ENCODE measurements at regions of chr19 and their contacts with region 1.

Region 1: DNA sequence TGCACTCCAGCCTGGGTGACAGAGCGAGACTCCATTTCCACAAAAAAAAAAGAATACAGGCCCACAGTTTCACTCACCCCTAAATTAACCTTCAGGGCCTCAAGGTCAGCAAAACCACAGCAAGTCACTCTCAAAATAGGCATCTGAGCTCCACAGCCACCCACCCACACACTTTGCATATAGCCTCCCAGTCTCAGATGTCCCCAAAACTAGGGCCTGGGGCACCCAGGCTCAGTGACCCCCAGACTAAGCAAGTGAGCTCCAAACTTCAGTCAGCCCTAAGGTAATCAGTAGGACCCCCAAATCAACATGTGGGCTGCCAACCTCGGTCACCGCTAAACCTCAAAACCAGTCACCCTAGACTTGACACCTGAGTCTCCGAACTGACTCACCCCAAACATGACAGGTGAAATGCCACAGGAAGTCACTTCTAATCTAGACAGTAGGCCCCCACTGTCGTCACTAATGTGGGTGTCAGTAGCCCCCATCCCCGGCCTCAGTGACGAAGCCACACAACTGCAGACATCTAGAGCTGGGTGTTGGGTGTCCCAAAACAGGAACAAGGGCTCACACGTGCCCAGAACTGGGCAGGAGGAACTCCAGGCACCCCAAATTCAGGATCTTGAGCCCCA is 13.9 kb downstream of the RABAC1 start:
- DNase-seq: peak; percentile 84 to 97 (median 95)
- H3K4me3 ChIP-seq: no peak overlapping the region
- H3K4me3 Mint-ChIP-seq: peak overlapping the region; percentile 53 to 91 (median 74)
- H3K27ac ChIP-seq: peak overlapping the region; percentile 28
- H3K27ac Mint-ChIP-seq: peak overlapping the region; percentile 95 to 100 (median 99)
- H3K4me1 ChIP-seq: peaks cover 39% of the 10 kb centered on the region
- H3K4me1 Mint-ChIP-seq: peaks cover 45 to 77% (median 55%) of the 10 kb centered on the region in 3 donors
- H3K27me3 ChIP-seq: no peaks in the 10 kb centered on the region
- H3K27me3 Mint-ChIP-seq: peaks cover 7 to 9% of the 10 kb centered on the region in 2 donors

Region 2: GRCh38 chr19:41847351-41848105 is 97.7 kb before region 1 on chr19:
- CTCF ChIA-PET with region 1: no interaction called
- POLR2A ChIA-PET with region 1: no interaction called
- DNase-seq: no peak
- H3K4me3 ChIP-seq: no peak overlapping the region
- H3K4me3 Mint-ChIP-seq: no peak overlapping the region
- H3K27ac ChIP-seq: no peak overlapping the region
- H3K27ac Mint-ChIP-seq: peak overlapping the region in 1 of 8 donors; percentile 78
- H3K4me1 ChIP-seq: no peaks in the 10 kb centered on the region
- H3K4me1 Mint-ChIP-seq: no peaks in the 10 kb centered on the region
- H3K27me3 ChIP-seq: no peaks in the 10 kb centered on the region
- H3K27me3 Mint-ChIP-seq: peaks cover 0 to 4% of the 10 kb centered on the region in 2 donors

Region 3: DNA sequence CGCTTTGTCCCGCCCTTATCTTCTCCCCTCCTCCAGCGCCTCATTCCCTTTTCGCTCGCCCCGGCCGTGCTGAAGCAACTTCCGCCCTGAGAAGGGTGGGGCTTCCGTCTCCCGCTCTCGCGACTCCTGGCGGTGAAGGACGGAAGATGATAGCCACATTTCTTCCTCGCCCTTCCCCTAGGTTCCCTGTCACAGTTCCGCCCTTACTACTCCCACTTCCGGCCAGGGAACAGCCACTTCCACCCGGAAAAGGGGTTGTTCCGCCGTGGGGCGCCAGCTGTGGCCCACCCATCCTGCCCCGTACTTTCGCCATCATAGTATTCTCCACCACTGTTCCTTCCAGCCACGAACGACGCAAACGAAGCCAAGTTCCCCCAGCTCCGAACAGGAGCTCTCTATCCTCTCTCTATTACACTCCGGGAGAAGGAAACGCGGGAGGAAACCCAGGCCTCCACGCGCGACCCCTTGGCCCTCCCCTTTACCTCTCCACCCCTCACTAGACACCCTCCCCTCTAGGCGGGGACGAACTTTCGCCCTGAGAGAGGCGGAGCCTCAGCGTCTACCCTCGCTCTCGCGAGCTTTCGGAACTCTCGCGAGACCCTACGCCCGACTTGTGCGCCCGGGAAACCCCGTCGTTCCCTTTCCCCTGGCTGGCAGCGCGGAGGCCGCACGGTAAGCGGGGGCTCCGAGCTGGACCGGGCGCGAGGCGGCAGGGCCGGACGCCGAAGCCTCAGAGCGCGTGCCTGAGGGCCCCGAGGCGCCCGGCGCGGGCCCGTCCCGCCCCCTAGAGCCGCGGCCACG is 85.4 kb before region 1 on chr19 and contains the start of gene RPS19:
- CTCF ChIA-PET with region 1: interaction called, 48 read pairs
- POLR2A ChIA-PET with region 1: interaction called, 24 read pairs
- DNase-seq: peak; percentile 96 to 99 (median 98)
- H3K4me3 ChIP-seq: peak within 1 kb of the TSS; percentile 79
- H3K4me3 Mint-ChIP-seq: peak within 1 kb of the TSS; percentile 88 to 99 (median 92)
- H3K27ac ChIP-seq: peak within 1 kb of the TSS; percentile 93
- H3K27ac Mint-ChIP-seq: peak within 1 kb of the TSS; percentile 86 to 100 (median 96)
- H3K4me1 ChIP-seq: peaks cover 48% of the 10 kb centered on the region
- H3K4me1 Mint-ChIP-seq: peaks cover 43 to 50% (median 46%) of the 10 kb centered on the region in 3 donors
- H3K27me3 ChIP-seq: no peaks in the 10 kb centered on the region
- H3K27me3 Mint-ChIP-seq: peaks cover 0 to 4% of the 10 kb centered on the region in 2 donors
- total RNA-seq, gene RPS19: 3,036 to 3,142 TPM

Region 4: DNA sequence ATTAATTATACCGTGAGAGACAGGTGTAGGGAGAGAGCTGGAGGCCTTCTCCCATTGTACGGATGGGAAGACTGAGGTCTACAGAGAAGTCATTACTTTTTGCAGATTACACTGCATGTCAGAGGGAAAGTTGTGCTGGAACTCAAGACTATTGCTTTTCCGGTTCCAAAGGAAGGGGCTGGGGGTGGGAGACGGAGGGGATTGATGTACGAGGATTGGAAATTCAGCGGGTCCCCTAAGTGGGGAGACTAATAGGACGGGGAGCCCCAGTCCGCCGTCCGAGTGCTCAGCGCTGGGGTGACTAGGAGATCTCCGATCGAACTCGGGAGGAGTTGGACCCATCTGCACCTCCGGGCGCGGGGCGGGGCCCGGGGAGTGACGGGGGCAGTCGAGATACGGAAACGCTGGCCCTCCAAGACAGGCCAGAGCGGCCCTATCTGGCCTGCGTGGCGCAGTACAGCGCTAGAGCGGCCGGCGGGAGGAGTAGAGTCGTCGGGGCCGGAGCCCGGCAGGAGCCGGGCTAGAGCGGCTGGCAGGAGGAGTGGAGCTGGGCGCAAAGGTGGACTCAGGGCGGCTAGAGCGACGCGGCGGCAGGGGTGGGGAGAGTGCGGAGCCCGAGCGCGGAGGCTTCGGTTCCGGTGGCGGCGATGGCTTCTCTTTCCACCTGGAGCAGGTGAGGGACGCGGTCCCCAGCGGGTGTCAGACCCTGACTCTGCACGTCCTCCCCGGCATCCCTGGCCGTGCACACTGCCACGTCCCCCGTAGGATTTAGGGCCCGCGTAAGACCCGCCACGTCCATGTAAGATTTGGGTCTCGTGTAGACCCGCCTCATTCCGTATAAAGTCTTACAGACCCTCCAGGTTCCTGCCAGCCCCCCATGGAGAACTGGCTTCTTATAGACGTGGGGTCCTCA is 61.2 kb before region 1 on chr19:
- CTCF ChIA-PET with region 1: interaction called, 12 read pairs
- POLR2A ChIA-PET with region 1: interaction called, 17 read pairs
- DNase-seq: peak; percentile 72 to 91 (median 83)
- H3K4me3 ChIP-seq: peak overlapping the region; percentile 100
- H3K4me3 Mint-ChIP-seq: peak overlapping the region; percentile 85 to 99 (median 94)
- H3K27ac ChIP-seq: peak overlapping the region; percentile 90
- H3K27ac Mint-ChIP-seq: peak overlapping the region; percentile 91 to 98 (median 97)
- H3K4me1 ChIP-seq: peaks cover 62% of the 10 kb centered on the region
- H3K4me1 Mint-ChIP-seq: peaks cover 54 to 65% (median 57%) of the 10 kb centered on the region in 3 donors
- H3K27me3 ChIP-seq: no peaks in the 10 kb centered on the region
- H3K27me3 Mint-ChIP-seq: peaks cover 0 to 2% of the 10 kb centered on the region in 2 donors

Region 5: DNA sequence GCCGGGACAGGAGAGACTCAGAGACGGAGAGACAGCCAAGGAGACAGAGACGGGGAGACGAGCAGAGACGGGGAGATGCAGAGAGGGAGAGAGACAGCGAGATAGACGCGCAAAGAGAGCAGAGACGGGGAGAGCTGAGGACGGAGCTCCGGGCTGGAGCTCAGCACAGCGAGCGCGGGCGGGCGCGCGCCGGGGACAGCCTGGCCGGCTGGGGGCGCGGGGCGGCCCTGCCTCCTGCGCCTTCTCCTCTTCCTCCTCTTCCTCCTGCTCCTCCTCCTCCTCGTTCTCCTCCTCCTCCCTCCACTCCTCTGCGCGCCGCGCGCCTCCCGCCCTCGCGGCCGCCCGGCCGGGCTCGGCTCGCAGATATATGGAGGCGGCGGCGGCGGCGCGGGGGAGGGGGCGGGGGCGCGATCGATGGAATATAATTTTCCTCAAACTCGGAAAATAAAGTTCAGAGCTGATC is 17.0 kb before region 1 on chr19 and contains the start of gene ERFL:
- CTCF ChIA-PET with region 1: interaction called, 10 read pairs
- POLR2A ChIA-PET with region 1: interaction called, 8 read pairs
- DNase-seq: peak in 1 of 5 donors; percentile 50
- H3K4me3 ChIP-seq: peak within 1 kb of the TSS; percentile 75
- H3K4me3 Mint-ChIP-seq: peak within 1 kb of the TSS; percentile 86 to 94 (median 88)
- H3K27ac ChIP-seq: peak within 1 kb of the TSS; percentile 53
- H3K27ac Mint-ChIP-seq: peak within 1 kb of the TSS; percentile 66 to 92 (median 86)
- H3K4me1 ChIP-seq: peaks cover 29% of the 10 kb centered on the region
- H3K4me1 Mint-ChIP-seq: peaks cover 24 to 30% (median 28%) of the 10 kb centered on the region in 3 donors
- H3K27me3 ChIP-seq: no peaks in the 10 kb centered on the region
- H3K27me3 Mint-ChIP-seq: peaks cover 2 to 4% of the 10 kb centered on the region in 2 donors
- total RNA-seq, gene ERFL: 1.3 to 1.4 TPM

Region 6: GRCh38 chr19:41934849-41935374 is 10.3 kb before region 1 on chr19:
- CTCF ChIA-PET with region 1: interaction called, 12 read pairs
- POLR2A ChIA-PET with region 1: interaction called, 14 read pairs
- DNase-seq: peak; percentile 60 to 85 (median 71)
- H3K4me3 ChIP-seq: no peak overlapping the region
- H3K4me3 Mint-ChIP-seq: peak overlapping the region in 4 of 7 donors; percentile 4 to 48 (median 15)
- H3K27ac ChIP-seq: no peak overlapping the region
- H3K27ac Mint-ChIP-seq: peak overlapping the region; percentile 41 to 95 (median 88)
- H3K4me1 ChIP-seq: peaks cover 48% of the 10 kb centered on the region
- H3K4me1 Mint-ChIP-seq: peaks cover 44 to 59% (median 44%) of the 10 kb centered on the region in 3 donors
- H3K27me3 ChIP-seq: peaks cover 8% of the 10 kb centered on the region
- H3K27me3 Mint-ChIP-seq: peaks cover 7 to 11% of the 10 kb centered on the region in 2 donors

Region 7: DNA sequence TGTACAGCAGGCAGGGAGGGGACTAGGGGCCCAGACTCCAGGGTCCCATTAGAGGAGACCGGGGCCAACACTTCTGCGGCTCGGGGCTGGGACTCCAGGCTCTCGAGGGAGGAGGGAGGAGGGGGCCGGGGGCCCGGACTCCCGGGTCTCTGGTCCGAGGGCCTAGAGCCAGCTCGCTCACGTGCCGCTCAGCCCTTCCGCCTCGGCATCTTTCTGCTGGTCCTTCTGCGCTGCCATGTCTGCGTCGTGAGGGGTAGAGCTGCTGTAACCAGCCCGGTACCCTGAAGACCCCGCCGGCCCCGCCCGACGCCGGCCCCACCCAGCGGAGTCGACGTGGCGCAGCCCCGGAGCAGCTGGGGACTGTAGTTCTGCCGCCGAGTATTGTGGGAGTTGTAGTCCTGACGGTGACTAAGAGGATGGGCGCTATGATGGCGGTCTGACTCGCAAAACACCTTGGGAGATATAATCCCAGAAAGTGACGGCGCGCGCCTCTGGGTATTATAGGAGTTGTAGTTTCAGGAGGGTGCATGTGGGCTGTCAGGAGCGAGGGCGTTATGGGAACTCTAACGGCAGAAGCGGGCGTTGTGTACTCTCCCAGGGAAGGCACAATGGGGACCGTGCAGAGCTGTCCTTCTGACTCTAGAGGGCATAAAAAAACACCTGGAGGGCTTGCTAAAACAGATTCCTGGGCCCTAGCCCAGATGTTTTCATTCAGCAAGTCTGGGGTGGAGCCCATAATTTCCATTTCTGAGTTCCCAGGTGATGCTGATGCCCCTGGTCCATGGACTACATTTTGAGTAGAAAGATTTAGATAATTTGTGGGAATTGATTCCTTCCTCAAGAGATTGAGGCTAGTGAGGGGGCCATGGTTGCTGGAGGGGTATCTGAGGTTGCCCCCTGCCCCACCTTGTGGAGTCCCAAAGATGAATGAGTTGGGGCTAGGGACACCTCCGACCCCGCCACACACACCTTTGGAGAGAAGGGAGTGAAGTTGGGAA is 14.1 kb after region 1 on chr19 and contains the start of gene RABAC1:
- CTCF ChIA-PET with region 1: interaction called, 3 read pairs
- POLR2A ChIA-PET with region 1: interaction called, 14 read pairs
- DNase-seq: peak; percentile 79 to 90 (median 82)
- H3K4me3 ChIP-seq: peak within 1 kb of the TSS; percentile 92
- H3K4me3 Mint-ChIP-seq: peak within 1 kb of the TSS; percentile 92 to 96 (median 94)
- H3K27ac ChIP-seq: peak within 1 kb of the TSS; percentile 86
- H3K27ac Mint-ChIP-seq: peak within 1 kb of the TSS; percentile 82 to 98 (median 94)
- H3K4me1 ChIP-seq: peaks cover 16% of the 10 kb centered on the region
- H3K4me1 Mint-ChIP-seq: peaks cover 17 to 22% (median 21%) of the 10 kb centered on the region in 3 donors
- H3K27me3 ChIP-seq: no peaks in the 10 kb centered on the region
- H3K27me3 Mint-ChIP-seq: no peaks in the 10 kb centered on the region
- total RNA-seq, gene RABAC1: 74.7 to 83.3 TPM